H1 (cell line): ENCODE measurements at regions of chr22 and their contacts with region 1.

Region 1: GRCh38 chr22:33018232-33018864 is 39.8 kb downstream of the SYN3 start:
- DNase-seq: peak; percentile 34 to 93
- H3K4me3 ChIP-seq: no peak overlapping the region
- H3K27ac ChIP-seq: no peak overlapping the region
- H3K4me1 ChIP-seq: peaks cover 0 to 2% (median 0%) of the 10 kb centered on the region in 4 experiments; a peak in 2 of 7 replicates
- H3K27me3 ChIP-seq: no peaks in the 10 kb centered on the region
- CTCF ChIP-seq: peak; percentile 88 to 92 (median 92)
- EP300 ChIP-seq: no peak
- POLR2A ChIP-seq: no peak
- RAD21 ChIP-seq: peak; percentile 87 to 90

Region 2: GRCh38 chr22:32897400-32897799 is 120.9 kb before region 1 on chr22:
- CTCF ChIA-PET with region 1: no interaction called
- POLR2A ChIA-PET with region 1: no interaction called
- DNase-seq: no peak
- H3K4me3 ChIP-seq: no peak overlapping the region
- H3K27ac ChIP-seq: no peak overlapping the region
- H3K4me1 ChIP-seq: no peaks in the 10 kb centered on the region
- H3K27me3 ChIP-seq: no peaks in the 10 kb centered on the region
- CTCF ChIP-seq: no peak
- EP300 ChIP-seq: no peak
- POLR2A ChIP-seq: no peak
- RAD21 ChIP-seq: no peak

Region 3: DNA sequence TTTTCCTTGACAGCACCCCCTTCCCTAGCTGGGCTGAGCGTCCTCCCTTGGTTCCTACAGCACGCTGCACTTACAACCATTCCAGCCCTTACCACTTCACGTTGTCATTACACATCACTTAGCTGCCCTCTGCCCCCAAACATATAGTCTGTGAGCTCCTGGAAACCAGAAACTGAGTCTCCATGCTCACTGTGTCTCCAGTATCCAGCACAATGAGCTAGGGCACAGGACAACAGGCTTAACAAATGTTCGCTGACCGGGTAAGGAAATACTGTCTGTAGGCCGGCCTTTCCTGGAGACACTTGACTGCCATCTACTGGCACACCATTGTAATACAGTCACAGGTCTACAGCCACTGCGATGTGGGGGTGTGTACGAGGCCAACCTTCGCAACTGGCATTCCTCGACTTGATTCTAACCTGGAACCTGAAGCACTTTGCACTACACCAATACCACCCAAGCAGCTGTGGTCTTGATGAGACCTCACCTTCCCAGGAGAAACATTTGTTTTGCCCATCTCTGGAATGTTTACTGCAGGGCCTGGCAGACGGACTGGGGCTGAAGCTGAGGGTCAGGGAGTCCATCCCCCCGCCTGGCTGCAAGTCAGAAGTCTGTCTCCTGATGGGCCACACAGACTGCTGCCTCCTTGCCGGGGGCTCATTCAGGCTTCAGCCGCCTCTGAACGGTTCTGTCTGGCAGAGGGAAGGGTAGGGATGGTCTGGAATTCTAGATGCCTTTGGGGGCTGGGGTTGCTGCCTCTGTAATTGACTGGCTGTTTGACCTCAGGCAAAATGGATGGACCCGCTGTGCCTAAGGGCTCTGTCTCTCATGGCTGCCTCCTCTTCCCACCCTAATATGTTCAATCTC is 32.2 kb before region 1 on chr22:
- CTCF ChIA-PET with region 1: interaction called, 12 read pairs
- POLR2A ChIA-PET with region 1: no interaction called
- DNase-seq: peak; percentile 36 to 86
- H3K4me3 ChIP-seq: no peak overlapping the region
- H3K27ac ChIP-seq: no peak overlapping the region
- H3K4me1 ChIP-seq: peaks cover 3 to 14% (median 8%) of the 10 kb centered on the region in 4 experiments; a peak in 5 of 7 replicates
- H3K27me3 ChIP-seq: no peaks in the 10 kb centered on the region
- CTCF ChIP-seq: peak; percentile 80 to 94 (median 82)
- EP300 ChIP-seq: no peak
- POLR2A ChIP-seq: no peak
- RAD21 ChIP-seq: peak; percentile 84 to 86

Region 4: DNA sequence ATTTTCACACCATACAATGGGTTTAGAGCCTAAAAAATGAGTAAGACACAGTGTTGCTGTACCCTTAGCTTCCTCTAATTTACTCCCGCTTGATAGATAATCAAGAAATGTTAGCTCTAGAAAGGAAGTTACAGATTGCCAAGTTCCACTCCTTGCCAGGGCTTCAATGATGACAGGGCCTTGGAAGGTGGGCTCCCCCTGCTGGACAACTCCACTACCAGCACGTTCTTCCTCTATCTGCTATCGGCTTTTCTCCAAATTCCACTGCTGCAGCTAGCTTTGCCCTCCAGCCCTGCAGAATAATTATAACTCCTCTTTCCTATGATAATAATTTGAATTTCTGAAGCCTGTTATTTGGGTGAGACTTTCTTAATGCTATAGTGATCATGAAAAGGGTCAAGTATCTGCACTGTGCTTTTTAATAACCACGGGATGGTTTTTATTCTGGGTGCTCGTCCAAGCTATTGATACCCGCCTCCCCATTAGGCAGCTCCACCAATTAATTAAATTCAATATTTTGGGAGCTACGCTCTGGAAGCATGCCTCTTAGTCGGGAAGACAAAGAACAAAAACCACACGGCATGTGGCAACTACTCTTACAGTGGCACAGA is 30.9 kb after region 1 on chr22:
- CTCF ChIA-PET with region 1: interaction called, 131 read pairs
- POLR2A ChIA-PET with region 1: interaction called, 3 read pairs
- DNase-seq: peak in 1 of 2 experiments; percentile 83
- H3K4me3 ChIP-seq: no peak overlapping the region
- H3K27ac ChIP-seq: no peak overlapping the region; the same call in 1 of the 2 replicates
- H3K4me1 ChIP-seq: peaks cover 11 to 33% (median 28%) of the 10 kb centered on the region in 4 experiments
- H3K27me3 ChIP-seq: no peaks in the 10 kb centered on the region; a peak in 1 of 7 replicates
- CTCF ChIP-seq: peak; percentile 85 to 94 (median 87)
- EP300 ChIP-seq: no peak
- POLR2A ChIP-seq: no peak
- RAD21 ChIP-seq: peak; percentile 72 to 79

Region 5: DNA sequence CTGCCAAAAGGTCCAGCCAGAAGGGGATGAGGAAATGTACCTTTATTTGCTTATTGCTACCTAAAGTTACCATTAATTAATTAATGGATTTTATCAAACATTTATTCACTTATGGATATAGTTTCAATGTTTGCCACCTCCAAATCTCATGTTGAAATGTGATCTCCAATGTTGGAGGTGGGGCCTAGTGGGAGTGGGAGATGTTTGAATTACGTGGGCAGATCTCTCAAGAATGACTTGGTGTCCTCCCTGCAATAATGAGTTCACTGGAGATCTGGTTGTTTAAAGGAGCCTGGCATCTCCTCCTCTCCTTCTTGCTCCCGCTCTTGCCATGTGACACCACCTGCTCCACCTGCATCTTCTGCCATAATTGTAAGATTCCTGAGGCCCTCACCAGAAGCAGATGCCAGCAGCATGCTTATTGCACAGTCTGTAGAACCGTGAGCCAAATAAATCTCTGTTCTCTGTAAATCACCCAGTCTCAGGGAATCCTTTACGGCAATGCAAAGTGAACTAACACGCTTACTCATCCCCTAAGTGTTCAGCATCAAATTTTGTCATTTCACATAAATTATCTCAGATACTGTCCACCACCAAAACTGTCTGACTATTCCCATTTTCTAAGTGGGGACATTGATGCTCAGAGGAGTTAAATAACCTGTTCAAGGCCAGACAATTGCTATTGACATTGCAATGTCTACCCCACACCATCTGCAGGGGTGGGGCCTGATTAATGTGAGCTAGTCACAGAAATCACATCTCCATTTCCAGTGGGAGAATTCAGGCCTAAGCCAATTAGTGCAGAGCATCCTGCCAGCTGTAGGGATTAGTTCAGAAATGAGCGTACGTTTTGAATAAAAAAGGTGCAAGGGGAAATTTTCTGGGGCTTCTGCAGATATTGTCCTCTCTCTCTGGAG is 91.4 kb after region 1 on chr22:
- CTCF ChIA-PET with region 1: interaction called, 11 read pairs
- POLR2A ChIA-PET with region 1: no interaction called
- DNase-seq: no peak
- H3K4me3 ChIP-seq: no peak overlapping the region
- H3K27ac ChIP-seq: no peak overlapping the region
- H3K4me1 ChIP-seq: no peaks in the 10 kb centered on the region
- H3K27me3 ChIP-seq: no peaks in the 10 kb centered on the region
- CTCF ChIP-seq: no peak
- EP300 ChIP-seq: no peak
- POLR2A ChIP-seq: no peak
- RAD21 ChIP-seq: no peak

Region 6: DNA sequence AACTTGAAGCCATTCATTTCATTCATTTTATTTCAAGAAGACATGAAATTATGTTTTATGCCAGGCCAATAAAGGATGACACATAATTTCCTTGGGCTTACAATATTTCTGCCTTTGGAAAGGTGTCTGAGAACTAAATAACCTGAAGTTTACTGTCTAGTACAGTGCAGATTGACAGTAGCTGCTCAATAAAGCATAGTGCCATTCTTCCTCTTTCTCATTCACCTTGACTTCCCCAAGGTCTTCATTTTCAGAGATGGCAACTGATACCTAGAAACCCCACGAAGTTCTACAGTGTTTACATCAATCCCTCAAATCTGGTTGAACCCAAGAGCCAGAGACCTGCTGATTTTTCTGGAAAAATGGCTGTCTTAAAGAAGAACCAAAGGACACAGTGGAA is 184.1 kb after region 1 on chr22:
- CTCF ChIA-PET with region 1: interaction called, 25 read pairs
- POLR2A ChIA-PET with region 1: no interaction called
- DNase-seq: no peak
- H3K4me3 ChIP-seq: no peak overlapping the region
- H3K27ac ChIP-seq: no peak overlapping the region
- H3K4me1 ChIP-seq: no peaks in the 10 kb centered on the region
- H3K27me3 ChIP-seq: no peaks in the 10 kb centered on the region; a peak in 2 of 7 replicates
- CTCF ChIP-seq: no peak
- EP300 ChIP-seq: no peak
- POLR2A ChIP-seq: no peak
- RAD21 ChIP-seq: no peak